ENCODE measurements at regions of chr18 and their contacts with region 1.

Region 1: GRCh38 chr18:11034884-11035283 is 114.5 kb downstream of the PIEZO2 start:
- DNase-seq: no peak
- H3K4me3 Mint-ChIP-seq: no peak overlapping the region
- H3K27ac Mint-ChIP-seq: no peak overlapping the region
- H3K4me1 Mint-ChIP-seq: peaks cover 20% of the 10 kb centered on the region
- H3K27me3 Mint-ChIP-seq: no peaks in the 10 kb centered on the region
- CTCF ChIP-seq: no peak

Region 2: DNA sequence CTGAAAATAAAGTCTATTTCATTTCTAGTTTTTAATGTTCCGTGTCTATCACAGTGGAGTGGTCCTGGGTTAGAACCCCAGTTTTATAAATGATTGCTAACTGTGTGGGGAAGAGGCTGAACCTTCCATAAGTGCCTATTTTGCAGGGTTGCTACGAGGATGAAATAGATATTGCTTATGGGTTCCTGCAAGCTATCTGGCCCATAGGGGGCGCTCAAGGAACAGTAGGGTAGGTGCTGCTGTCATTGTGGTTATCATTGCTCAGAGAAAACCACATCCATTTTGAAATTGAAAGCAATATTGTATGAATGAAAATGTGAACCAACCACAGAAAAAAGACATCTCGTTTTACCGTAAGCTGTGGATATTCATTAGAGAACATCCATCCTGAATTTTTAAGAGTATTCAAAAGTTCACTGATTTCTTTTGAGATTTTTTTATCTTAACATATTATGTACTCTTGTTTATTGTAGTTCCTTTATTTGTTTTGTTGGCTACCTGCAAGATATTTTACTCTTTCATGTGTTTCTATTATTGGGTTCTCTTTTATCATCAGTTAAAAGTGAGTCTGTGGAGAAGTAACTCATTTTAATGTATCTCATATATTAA is 247.5 kb before region 1 on chr18:
- CTCF ChIA-PET with region 1: no interaction called
- intact Hi-C with region 1: loop called (anchors 1 kb)
- DNase-seq: peak; percentile 92
- H3K4me3 Mint-ChIP-seq: no peak overlapping the region
- H3K27ac Mint-ChIP-seq: no peak overlapping the region
- H3K4me1 Mint-ChIP-seq: no peaks in the 10 kb centered on the region
- H3K27me3 Mint-ChIP-seq: peaks cover 27% of the 10 kb centered on the region
- CTCF ChIP-seq: peak; percentile 66

Region 3: GRCh38 chr18:10860928-10861327 is 174.0 kb before region 1 on chr18:
- CTCF ChIA-PET with region 1: no interaction called
- intact Hi-C with region 1: no loop called
- DNase-seq: no peak
- H3K4me3 Mint-ChIP-seq: no peak overlapping the region
- H3K27ac Mint-ChIP-seq: no peak overlapping the region
- H3K4me1 Mint-ChIP-seq: no peaks in the 10 kb centered on the region
- H3K27me3 Mint-ChIP-seq: peaks cover 16% of the 10 kb centered on the region
- CTCF ChIP-seq: no peak

Region 4: DNA sequence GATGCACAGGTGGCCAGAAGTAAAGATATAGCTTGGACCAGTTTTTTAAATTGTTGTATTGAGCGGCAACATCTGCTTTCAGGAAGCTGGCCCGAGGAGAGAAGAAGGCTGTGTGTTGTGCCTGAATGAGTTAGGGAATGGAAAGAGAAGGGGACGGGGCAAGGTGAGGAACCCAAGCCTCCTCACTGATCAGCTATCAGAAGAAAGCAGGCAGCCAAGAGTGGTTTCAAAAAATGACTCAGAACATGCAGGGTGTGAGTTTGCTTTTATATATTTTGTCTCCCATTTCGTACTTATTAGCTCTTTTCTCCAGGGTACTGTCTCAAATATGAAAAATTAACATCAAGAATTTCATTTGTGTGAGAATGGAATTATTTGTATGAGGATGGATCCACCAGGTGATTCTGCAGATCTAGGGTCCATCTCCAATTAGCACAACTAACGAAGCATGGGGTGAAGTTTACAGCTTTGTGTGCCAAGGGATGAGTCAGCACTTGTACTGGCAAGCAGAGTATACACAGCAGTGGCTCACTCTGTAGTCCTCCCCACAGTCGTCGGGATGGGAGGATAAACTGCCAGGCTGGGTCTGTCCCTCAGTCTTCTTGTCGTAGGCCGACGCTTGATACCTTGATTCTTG is 61.2 kb before region 1 on chr18:
- CTCF ChIA-PET with region 1: no interaction called
- intact Hi-C with region 1: loop called (anchors 10 kb)
- DNase-seq: no peak
- H3K4me3 Mint-ChIP-seq: no peak overlapping the region
- H3K27ac Mint-ChIP-seq: no peak overlapping the region
- H3K4me1 Mint-ChIP-seq: peaks cover 9% of the 10 kb centered on the region
- H3K27me3 Mint-ChIP-seq: no peaks in the 10 kb centered on the region
- CTCF ChIP-seq: no peak

Region 5: DNA sequence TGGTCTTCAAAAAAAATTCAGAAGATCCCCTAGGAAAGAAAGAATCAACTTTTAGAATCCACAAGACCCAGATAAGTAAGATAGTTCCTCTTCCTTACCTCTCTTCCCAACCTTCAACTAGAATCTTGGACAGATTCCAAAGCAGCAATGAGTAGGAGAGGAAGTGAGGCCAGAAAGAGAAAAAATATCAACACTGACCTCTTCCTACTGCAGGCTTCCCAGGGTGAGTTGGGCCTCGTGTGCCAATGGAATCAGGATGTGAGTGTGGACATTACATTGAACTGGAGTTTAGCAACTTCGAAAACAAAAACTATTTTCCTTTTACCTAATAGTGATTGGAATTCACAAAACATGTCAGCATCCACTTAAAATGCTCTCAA is 217.0 kb after region 1 on chr18:
- CTCF ChIA-PET with region 1: no interaction called
- intact Hi-C with region 1: no loop called
- DNase-seq: no peak
- H3K4me3 Mint-ChIP-seq: no peak overlapping the region
- H3K27ac Mint-ChIP-seq: no peak overlapping the region
- H3K4me1 Mint-ChIP-seq: no peaks in the 10 kb centered on the region
- H3K27me3 Mint-ChIP-seq: peaks cover 32% of the 10 kb centered on the region
- CTCF ChIP-seq: no peak